ENCODE measurements at regions of chr10 and their contacts with region 1.

Region 1: DNA sequence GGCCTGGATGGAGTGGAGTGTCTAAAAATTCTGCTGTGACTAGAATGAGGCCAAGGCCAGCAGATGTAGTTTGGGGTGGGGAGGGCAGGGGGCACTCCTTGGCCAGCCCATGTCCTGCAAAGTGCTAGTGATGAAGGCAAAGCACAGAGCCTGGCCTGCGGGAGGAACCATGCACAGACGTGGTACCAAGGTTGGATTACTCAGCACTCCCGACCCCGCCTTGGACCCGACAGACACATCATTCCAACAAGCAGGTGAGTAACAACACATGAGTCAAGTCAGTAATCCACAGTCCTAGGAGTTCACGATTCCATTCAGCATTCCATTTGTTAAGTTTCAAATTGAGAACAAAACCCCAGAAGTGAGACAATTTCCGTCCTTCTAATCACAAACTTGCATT is 317.3 kb downstream of the TCERG1L start:
- DNase-seq: no peak
- ATAC-seq: no peak
- H3K4me3 ChIP-seq: no peak overlapping the region
- H3K27ac ChIP-seq: peak overlapping the region in 2 of 4 donors; percentile 33 to 60
- H3K4me1 ChIP-seq: peaks cover 10 to 17% of the 10 kb centered on the region in 2 donors
- H3K27me3 ChIP-seq: no peaks in the 10 kb centered on the region
- CTCF ChIP-seq: no peak
- POLR2A ChIP-seq: no peak

Region 2: GRCh38 chr10:130967784-130968183 is 26.4 kb before region 1 on chr10:
- in situ Hi-C with region 1: no loop called
- intact Hi-C with region 1: loop called (anchors 2 kb)
- DNase-seq: peak; percentile 32 to 52
- ATAC-seq: peak; percentile 95 to 98
- H3K4me3 ChIP-seq: no peak overlapping the region
- H3K27ac ChIP-seq: peak overlapping the region in 2 of 4 donors; percentile 18 to 60
- H3K4me1 ChIP-seq: peaks cover 0 to 9% of the 10 kb centered on the region in 2 donors
- H3K27me3 ChIP-seq: no peaks in the 10 kb centered on the region
- CTCF ChIP-seq: no peak
- POLR2A ChIP-seq: no peak

Region 3: DNA sequence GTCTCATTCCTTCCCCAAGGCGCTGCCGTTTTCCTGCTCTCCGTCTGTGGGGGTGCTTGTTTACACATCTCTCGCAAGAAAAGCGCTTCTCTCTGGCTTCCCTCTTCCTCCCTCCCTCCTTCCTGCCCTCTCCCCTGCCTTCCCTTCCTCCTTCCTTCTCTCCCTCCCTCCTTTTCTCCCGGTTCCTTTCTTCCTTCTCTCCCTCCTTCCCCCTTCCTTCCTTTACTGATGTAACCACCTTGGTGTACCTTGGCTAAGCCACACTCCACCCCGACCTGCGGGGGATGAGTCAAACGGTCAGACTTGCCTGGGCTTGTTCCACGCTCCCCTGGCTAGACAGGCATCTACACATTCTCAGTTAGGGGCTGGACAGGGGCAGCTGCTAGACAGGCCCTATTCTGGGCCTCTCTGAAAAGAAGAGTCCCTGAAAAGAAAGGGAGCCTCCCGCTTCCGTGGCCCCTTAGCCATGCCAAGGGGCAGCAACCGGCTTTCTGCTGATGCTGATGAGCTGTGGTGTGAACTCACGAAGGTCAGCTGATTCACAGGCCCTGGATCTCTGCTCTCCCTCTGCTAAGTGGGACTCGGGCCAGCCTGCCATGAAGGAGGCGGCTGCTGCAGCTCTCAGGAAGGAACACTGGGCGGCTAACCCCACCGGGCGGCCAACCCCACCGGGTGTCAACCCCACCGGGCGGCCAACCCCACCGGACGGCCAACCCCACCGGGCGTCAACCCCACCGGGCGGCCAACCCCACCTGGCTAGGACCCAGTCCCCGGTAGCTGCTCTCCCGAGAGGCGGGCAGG is 100.5 kb after region 1 on chr10:
- in situ Hi-C with region 1: no loop called
- intact Hi-C with region 1: no loop called
- DNase-seq: no peak
- ATAC-seq: no peak
- H3K4me3 ChIP-seq: no peak overlapping the region
- H3K27ac ChIP-seq: no peak overlapping the region
- H3K4me1 ChIP-seq: no peaks in the 10 kb centered on the region
- H3K27me3 ChIP-seq: no peaks in the 10 kb centered on the region
- CTCF ChIP-seq: no peak
- POLR2A ChIP-seq: no peak

Measured in gastrocnemius medialis (tissue), 4 donors.